A673 (cell line): ENCODE measurements at regions of chr18 and their contacts with region 1.

Region 1: DNA sequence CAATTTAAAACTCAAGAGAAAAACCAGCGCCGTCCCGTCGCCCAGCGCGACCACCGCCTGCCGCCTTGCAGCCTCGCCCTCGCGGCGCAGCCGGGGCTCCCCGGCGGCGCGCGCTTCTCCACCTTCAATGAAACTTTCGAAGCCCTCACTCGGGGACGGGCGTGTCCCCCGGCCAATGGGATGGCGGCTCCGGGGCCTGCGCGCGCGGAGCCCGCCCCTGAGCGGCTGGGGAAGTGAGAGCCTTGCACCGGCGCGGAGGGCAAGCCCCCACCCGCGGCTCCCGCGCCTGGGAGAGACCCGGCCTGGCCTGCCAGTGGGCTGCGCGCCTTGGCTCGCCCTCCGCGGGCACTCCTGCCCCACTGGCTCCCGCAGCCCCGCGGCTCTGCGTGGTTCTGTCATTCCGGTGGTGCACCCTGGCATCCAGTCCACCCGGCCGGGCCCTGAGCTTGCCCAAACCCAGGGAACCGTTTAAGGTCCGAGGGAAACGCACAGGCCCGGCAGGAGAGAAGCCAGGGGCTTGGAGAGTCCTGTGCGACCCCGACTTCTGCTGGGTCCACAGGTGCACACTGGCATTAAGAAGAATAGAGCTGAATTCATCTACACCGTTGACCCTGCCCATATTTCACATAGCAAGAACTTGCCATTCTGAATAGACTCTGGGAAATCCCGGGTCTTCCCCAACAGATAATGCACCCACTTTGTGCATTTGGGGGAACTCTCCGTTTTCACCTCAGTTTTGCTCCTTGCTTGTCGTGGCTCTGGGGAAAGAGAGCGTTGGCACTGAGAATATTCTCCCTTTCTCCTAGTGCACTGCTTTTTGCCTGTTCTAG is at the start of gene PIEZO2:
- DNase-seq: peak; percentile 81
- H3K4me3 ChIP-seq: peak within 1 kb of the TSS; percentile 39
- H3K27ac ChIP-seq: no peak within 1 kb of the TSS
- H3K4me1 ChIP-seq: peaks cover 17% of the 10 kb centered on the region
- H3K27me3 ChIP-seq: peaks cover 52% of the 10 kb centered on the region
- CTCF ChIP-seq: no peak
- total RNA-seq, gene PIEZO2: 5.5 and 8.8 TPM in 2 replicates

Region 2: GRCh38 chr18:10560450-10561045 is 589.1 kb before region 1 on chr18:
- CTCF ChIA-PET with region 1: interaction called, 25 read pairs
- POLR2A ChIA-PET with region 1: no interaction called
- intact Hi-C with region 1: loop called (anchors 1 kb)
- DNase-seq: peak; percentile 86
- H3K4me3 ChIP-seq: peak overlapping the region; percentile 21
- H3K27ac ChIP-seq: peak overlapping the region; percentile 35
- H3K4me1 ChIP-seq: peaks cover 11% of the 10 kb centered on the region
- H3K27me3 ChIP-seq: no peaks in the 10 kb centered on the region
- CTCF ChIP-seq: peak; percentile 87

Region 3: DNA sequence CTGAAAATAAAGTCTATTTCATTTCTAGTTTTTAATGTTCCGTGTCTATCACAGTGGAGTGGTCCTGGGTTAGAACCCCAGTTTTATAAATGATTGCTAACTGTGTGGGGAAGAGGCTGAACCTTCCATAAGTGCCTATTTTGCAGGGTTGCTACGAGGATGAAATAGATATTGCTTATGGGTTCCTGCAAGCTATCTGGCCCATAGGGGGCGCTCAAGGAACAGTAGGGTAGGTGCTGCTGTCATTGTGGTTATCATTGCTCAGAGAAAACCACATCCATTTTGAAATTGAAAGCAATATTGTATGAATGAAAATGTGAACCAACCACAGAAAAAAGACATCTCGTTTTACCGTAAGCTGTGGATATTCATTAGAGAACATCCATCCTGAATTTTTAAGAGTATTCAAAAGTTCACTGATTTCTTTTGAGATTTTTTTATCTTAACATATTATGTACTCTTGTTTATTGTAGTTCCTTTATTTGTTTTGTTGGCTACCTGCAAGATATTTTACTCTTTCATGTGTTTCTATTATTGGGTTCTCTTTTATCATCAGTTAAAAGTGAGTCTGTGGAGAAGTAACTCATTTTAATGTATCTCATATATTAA is 362.3 kb before region 1 on chr18:
- CTCF ChIA-PET with region 1: interaction called, 4 read pairs
- POLR2A ChIA-PET with region 1: no interaction called
- intact Hi-C with region 1: loop called (anchors 5 kb)
- DNase-seq: peak; percentile 86
- H3K4me3 ChIP-seq: no peak overlapping the region
- H3K27ac ChIP-seq: no peak overlapping the region
- H3K4me1 ChIP-seq: no peaks in the 10 kb centered on the region
- H3K27me3 ChIP-seq: peaks cover 13% of the 10 kb centered on the region
- CTCF ChIP-seq: peak; percentile 93

Region 4: GRCh38 chr18:10851824-10852319 is 297.8 kb before region 1 on chr18:
- CTCF ChIA-PET with region 1: interaction called, 4 read pairs
- POLR2A ChIA-PET with region 1: no interaction called
- intact Hi-C with region 1: loop called (anchors 1 kb)
- DNase-seq: peak; percentile 77
- H3K4me3 ChIP-seq: no peak overlapping the region
- H3K27ac ChIP-seq: no peak overlapping the region
- H3K4me1 ChIP-seq: no peaks in the 10 kb centered on the region
- H3K27me3 ChIP-seq: peaks cover 27% of the 10 kb centered on the region
- CTCF ChIP-seq: peak; percentile 81

Region 5: DNA sequence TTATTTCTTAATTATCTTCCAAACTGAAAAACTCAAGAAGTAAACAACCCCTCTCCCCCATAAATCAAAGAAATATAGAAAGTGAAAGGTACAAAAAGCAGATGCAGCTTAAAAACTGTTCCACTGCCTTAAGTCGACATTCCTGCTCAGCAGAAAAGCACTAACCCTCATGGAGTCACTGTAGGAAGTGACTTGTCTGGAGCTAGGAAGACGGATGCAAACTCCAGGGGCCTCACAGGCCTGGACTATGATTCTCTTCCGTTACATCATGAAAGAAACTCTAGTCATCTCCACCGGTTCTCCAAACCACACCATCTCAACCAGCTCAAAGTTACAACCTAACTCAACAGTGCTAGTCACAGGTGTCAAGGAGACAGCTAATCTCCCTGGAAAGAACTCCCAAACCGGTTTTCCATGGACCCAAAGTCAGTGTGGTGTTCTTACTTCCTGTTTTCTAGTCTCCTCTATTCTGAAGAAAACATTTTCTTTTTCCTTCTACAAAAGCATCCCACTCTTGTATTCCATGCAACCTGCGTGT is 128.7 kb before region 1 on chr18:
- CTCF ChIA-PET with region 1: no interaction called
- POLR2A ChIA-PET with region 1: no interaction called
- intact Hi-C with region 1: no loop called
- DNase-seq: no peak
- H3K4me3 ChIP-seq: no peak overlapping the region
- H3K27ac ChIP-seq: no peak overlapping the region
- H3K4me1 ChIP-seq: no peaks in the 10 kb centered on the region
- H3K27me3 ChIP-seq: peaks cover 20% of the 10 kb centered on the region
- CTCF ChIP-seq: no peak

Region 6: GRCh38 chr18:11040823-11041656 is 108.6 kb before region 1 on chr18:
- CTCF ChIA-PET with region 1: no interaction called
- POLR2A ChIA-PET with region 1: no interaction called
- intact Hi-C with region 1: loop called (anchors 5 kb)
- DNase-seq: peak; percentile 56
- H3K4me3 ChIP-seq: no peak overlapping the region
- H3K27ac ChIP-seq: no peak overlapping the region
- H3K4me1 ChIP-seq: no peaks in the 10 kb centered on the region
- H3K27me3 ChIP-seq: peaks cover 10% of the 10 kb centered on the region
- CTCF ChIP-seq: peak; percentile 81

Region 7: DNA sequence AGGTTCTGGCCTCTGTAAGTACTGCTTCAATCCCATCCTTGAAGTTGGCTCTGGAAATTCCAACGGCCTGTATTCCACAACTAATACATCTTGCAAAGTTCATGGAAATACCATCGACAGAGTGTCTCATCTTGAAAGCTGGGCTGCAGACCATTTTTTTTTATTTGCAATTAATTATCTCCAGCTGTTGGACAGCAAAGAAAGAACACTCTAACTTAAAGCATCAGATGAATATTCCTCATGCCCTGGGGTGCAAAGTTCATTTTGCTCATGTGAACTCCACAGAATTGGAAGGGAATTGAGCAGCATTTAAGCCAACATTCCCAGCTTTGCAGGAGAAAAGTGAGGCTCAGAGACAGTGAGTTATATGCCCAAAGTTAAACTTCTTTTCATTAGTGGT is 96.2 kb after region 1 on chr18:
- CTCF ChIA-PET with region 1: no interaction called
- POLR2A ChIA-PET with region 1: no interaction called
- intact Hi-C with region 1: no loop called
- DNase-seq: no peak
- H3K4me3 ChIP-seq: no peak overlapping the region
- H3K27ac ChIP-seq: no peak overlapping the region
- H3K4me1 ChIP-seq: no peaks in the 10 kb centered on the region
- H3K27me3 ChIP-seq: peaks cover 20% of the 10 kb centered on the region
- CTCF ChIP-seq: no peak